Activated CD4-positive, alpha-beta T cell treated with anti-CD3 and anti-CD28 coated beads for 36 hours (primary cell): ENCODE measurements at regions of chr22 and their contacts with region 1.

Region 1: DNA sequence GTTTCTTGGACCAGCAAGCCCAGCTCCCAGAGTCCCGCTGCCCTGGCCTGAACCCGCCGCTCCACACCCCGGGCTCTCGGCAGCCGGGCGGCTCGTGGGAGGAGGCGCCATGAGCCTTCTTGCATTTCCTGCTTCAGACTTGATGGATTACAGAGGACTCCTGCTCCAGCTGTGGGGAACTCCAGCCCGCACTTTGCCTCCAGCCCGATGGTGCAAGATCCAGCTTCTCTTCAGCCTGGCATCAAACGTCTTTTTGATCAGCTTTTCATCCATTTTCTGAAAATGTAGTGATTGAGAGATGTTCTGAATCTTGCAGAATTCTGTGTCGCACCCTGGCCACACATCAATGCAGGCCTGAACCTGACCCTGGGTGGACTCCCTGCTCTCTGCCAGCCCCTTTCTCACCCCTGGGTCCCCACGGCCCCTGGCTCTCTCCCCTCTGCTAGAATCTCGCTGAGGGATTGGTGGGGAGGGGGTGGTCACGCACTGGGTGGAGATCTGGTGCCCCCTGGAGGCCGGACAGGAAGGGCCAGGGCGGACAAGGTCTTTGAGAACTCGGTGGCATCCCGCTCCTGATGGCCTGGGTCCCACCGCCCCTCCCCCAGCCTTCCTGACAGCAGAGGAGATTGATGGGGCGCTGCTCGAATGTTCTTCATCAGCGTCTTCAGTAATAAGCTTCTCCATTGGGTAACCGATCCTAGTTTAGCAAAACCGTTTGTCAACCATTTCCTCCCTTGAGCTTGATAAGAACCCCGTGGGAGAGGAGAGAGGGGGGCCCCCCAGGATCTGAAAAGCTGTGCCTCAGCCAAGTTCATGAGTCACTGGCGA is 12.1 kb upstream of the NFAM1 start:
- DNase-seq: peak; percentile 88
- ATAC-seq: peak; percentile 69
- H3K4me3 Mint-ChIP-seq: peak overlapping the region; percentile 68
- H3K27ac Mint-ChIP-seq: peak overlapping the region; percentile 78
- H3K4me1 Mint-ChIP-seq: peaks cover 32% of the 10 kb centered on the region
- H3K27me3 Mint-ChIP-seq: no peaks in the 10 kb centered on the region

Region 2: GRCh38 chr22:41966607-41967240 is 477.6 kb before region 1 on chr22:
- CTCF ChIA-PET with region 1: interaction called, 4 read pairs
- POLR2A ChIA-PET with region 1: no interaction called
- intact Hi-C with region 1: loop called in 1 of 2 experiments (anchors 2 kb)
- DNase-seq: peak; percentile 66
- ATAC-seq: peak; percentile 86
- H3K4me3 Mint-ChIP-seq: no peak overlapping the region
- H3K27ac Mint-ChIP-seq: peak overlapping the region; percentile 42
- H3K4me1 Mint-ChIP-seq: peaks cover 5% of the 10 kb centered on the region
- H3K27me3 Mint-ChIP-seq: no peaks in the 10 kb centered on the region

Region 3: GRCh38 chr22:42160251-42160650 is 284.0 kb before region 1 on chr22:
- CTCF ChIA-PET with region 1: no interaction called
- POLR2A ChIA-PET with region 1: no interaction called
- intact Hi-C with region 1: no loop called
- DNase-seq: no peak
- ATAC-seq: no peak
- H3K4me3 Mint-ChIP-seq: no peak overlapping the region
- H3K27ac Mint-ChIP-seq: no peak overlapping the region
- H3K4me1 Mint-ChIP-seq: no peaks in the 10 kb centered on the region
- H3K27me3 Mint-ChIP-seq: no peaks in the 10 kb centered on the region

Region 4: DNA sequence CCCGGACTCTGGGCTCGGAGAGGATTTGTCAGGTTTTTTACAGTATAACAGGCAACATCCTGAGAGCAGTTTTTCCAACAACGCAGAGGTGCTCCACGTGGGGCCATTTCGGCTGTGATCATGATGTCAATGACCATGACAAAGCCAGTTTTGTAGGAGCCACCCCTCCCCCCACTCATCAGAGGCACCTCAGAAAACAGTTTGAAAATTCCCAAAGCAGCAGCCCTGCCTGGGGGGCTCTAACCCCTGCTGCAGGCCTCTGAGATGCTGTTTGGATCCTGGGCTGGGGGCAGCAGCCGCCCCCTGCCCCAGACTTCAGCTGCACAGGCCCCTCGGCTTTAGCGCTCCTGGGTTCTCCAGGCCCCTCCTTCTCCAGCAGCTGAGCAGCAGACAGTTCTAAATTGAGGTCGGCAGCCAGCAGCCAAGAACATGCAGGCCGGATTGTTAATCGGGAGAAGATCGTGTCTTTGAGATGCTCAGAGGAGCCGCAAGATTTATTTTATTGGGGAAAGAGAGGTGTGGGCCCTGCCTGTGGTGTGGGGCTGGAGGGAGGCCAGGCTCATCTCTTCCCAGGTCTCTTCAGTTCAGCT is 31.5 kb before region 1 on chr22:
- CTCF ChIA-PET with region 1: no interaction called
- POLR2A ChIA-PET with region 1: no interaction called
- intact Hi-C with region 1: no loop called
- DNase-seq: no peak
- ATAC-seq: no peak
- H3K4me3 Mint-ChIP-seq: no peak overlapping the region
- H3K27ac Mint-ChIP-seq: no peak overlapping the region
- H3K4me1 Mint-ChIP-seq: no peaks in the 10 kb centered on the region
- H3K27me3 Mint-ChIP-seq: no peaks in the 10 kb centered on the region

Region 5: GRCh38 chr22:42462016-42462415 is 17.7 kb after region 1 on chr22:
- CTCF ChIA-PET with region 1: interaction called, 14 read pairs
- POLR2A ChIA-PET with region 1: no interaction called
- intact Hi-C with region 1: no loop called
- DNase-seq: no peak
- ATAC-seq: no peak
- H3K4me3 Mint-ChIP-seq: no peak overlapping the region
- H3K27ac Mint-ChIP-seq: no peak overlapping the region
- H3K4me1 Mint-ChIP-seq: peaks cover 5% of the 10 kb centered on the region
- H3K27me3 Mint-ChIP-seq: peaks cover 20% of the 10 kb centered on the region